ENCODE measurements at regions of chr2 and their contacts with region 1.

Region 1: DNA sequence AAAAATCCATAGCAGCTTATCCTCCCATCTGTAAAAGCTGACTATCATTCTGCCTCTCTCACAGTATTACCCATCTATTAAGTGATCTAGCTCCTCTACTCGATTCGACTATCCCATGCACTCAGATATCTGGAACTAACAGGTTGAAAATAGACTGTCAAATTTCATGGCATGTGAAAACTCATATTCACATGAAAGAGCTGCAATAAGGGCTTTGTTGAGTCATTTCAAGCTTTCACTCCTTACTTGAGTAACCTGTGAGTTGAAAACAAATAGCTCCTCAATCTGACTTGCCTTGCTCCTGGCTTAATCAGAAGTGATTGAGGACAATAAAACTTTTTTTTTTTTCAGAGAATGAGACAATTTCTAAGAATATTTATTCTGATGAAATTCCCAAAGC is 192.4 kb upstream of the ERBB4 start:
- DNase-seq: no peak
- H3K4me3 ChIP-seq: no peak overlapping the region
- H3K27me3 ChIP-seq: no peaks in the 10 kb centered on the region
- CTCF ChIP-seq: no peak

Region 2: GRCh38 chr2:212713644-212714043 is 17.4 kb before region 1 on chr2:
- CTCF ChIA-PET with region 1: no interaction called
- POLR2A ChIA-PET with region 1: interaction called, 11 read pairs
- DNase-seq: no peak
- H3K4me3 ChIP-seq: no peak overlapping the region
- H3K27me3 ChIP-seq: no peaks in the 10 kb centered on the region
- CTCF ChIP-seq: no peak

Region 3: GRCh38 chr2:212745359-212745758 is 14.4 kb after region 1 on chr2:
- CTCF ChIA-PET with region 1: no interaction called
- POLR2A ChIA-PET with region 1: no interaction called
- DNase-seq: no peak
- H3K4me3 ChIP-seq: no peak overlapping the region
- H3K27me3 ChIP-seq: no peaks in the 10 kb centered on the region
- CTCF ChIP-seq: no peak

Measured in BJ (cell line).